AG04449 (cell line): ENCODE measurements at regions of chr21 and their contacts with region 1.

Region 1: GRCh38 chr21:36630485-36631206 is 68.3 kb upstream of the SIM2 start:
- DNase-seq: no peak
- H3K4me3 ChIP-seq: no peak overlapping the region
- CTCF ChIP-seq: peak; percentile 70

Region 2: DNA sequence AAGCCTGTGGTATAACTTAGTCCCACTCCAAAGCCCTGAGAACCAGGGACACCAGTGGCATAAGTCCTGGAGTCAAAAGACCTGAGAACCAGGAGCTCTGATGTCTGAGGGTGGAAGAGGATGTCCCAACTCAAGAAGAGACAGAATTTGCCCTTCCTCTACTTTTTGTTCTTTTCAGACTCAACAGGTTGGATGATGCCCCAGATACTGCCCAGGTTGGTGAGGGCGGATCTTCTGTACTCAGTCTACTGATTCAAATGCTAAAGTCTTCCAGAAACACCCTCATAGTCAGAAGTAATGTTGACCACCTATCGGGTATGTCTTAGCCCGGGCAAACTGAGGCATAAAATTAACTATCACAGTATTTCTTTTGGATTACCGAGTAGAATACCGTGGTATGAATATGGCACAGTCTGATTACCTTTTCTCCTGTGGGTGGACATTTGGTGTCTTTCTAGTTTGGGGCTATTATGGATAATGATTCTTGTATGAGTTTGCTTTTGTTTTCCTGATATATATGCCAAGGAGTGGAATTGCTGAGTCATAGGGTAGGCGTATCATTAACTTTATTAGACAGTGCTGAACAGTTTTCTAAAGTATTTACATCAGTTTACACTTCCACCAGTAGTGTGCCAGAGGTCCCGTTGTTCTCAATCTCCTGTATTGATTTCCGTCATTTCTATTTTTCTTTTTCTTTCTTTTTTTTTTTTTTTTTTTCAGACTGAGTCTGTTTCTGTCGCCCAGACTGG is 248.6 kb before region 1 on chr21:
- CTCF ChIA-PET with region 1: no interaction called
- POLR2A ChIA-PET with region 1: no interaction called
- DNase-seq: no peak
- H3K4me3 ChIP-seq: no peak overlapping the region
- CTCF ChIP-seq: no peak

Region 3: GRCh38 chr21:36606287-36606982 is 24.2 kb before region 1 on chr21:
- CTCF ChIA-PET with region 1: interaction called, 12 read pairs
- POLR2A ChIA-PET with region 1: no interaction called
- DNase-seq: no peak
- H3K4me3 ChIP-seq: no peak overlapping the region
- CTCF ChIP-seq: no peak

Region 4: GRCh38 chr21:36647279-36648093 is 16.8 kb after region 1 on chr21:
- CTCF ChIA-PET with region 1: interaction called, 43 read pairs
- POLR2A ChIA-PET with region 1: no interaction called
- DNase-seq: no peak
- H3K4me3 ChIP-seq: no peak overlapping the region
- CTCF ChIP-seq: no peak

Region 5: GRCh38 chr21:36688324-36688723 is 57.7 kb after region 1 on chr21:
- CTCF ChIA-PET with region 1: interaction called, 16 read pairs
- POLR2A ChIA-PET with region 1: no interaction called
- DNase-seq: no peak
- H3K4me3 ChIP-seq: no peak overlapping the region
- CTCF ChIP-seq: no peak

Region 6: DNA sequence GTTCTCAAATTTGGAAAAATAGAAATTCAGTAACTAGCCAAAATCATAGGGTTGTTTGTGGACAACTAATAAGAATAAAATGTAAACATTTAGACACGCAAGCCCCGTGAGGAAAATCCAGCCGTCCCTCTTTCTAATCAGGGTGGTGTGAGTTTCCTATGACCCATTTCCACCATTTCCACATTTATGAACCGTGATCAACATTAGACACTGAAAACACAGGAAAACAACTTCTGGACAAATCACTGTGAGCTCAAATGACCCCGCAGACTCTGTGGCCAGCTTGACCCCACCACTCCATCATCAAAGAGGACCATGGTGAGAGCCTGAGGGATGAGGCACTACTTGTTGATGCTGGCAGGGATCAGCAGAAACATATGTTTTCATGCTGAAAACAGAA is 169.2 kb after region 1 on chr21:
- CTCF ChIA-PET with region 1: no interaction called
- POLR2A ChIA-PET with region 1: no interaction called
- DNase-seq: no peak
- H3K4me3 ChIP-seq: no peak overlapping the region
- CTCF ChIP-seq: no peak

Region 7: GRCh38 chr21:36927719-36928117 is 297.1 kb after region 1 on chr21:
- CTCF ChIA-PET with region 1: interaction called, 17 read pairs
- POLR2A ChIA-PET with region 1: no interaction called
- DNase-seq: peak; percentile 94
- H3K4me3 ChIP-seq: no peak overlapping the region
- CTCF ChIP-seq: peak; percentile 91